Dendritic cell treated with granulocyte-macrophage colony-stimulating factor and Interleukin-4, amounts not matched to agents 40 ng/mL and 50 ng/mL, for 4 days (primary cell): ENCODE measurements at regions of chr15 and their contacts with region 1.

Region 1: GRCh38 chr15:71448688-71449114 is 333.4 kb downstream of the THSD4 start:
- H3K4me3 Mint-ChIP-seq: no peak overlapping the region
- H3K27ac Mint-ChIP-seq: no peak overlapping the region
- H3K4me1 Mint-ChIP-seq: peaks cover under 1% of the 10 kb centered on the region
- H3K27me3 Mint-ChIP-seq: peaks cover 2% of the 10 kb centered on the region

Region 2: GRCh38 chr15:71043361-71043760 is 405.3 kb before region 1 on chr15:
- intact Hi-C with region 1: no loop called
- H3K4me3 Mint-ChIP-seq: no peak overlapping the region
- H3K27ac Mint-ChIP-seq: no peak overlapping the region
- H3K4me1 Mint-ChIP-seq: no peaks in the 10 kb centered on the region
- H3K27me3 Mint-ChIP-seq: no peaks in the 10 kb centered on the region

Region 3: GRCh38 chr15:71730277-71731144 is 281.8 kb after region 1 on chr15:
- intact Hi-C with region 1: loop called (anchors 1 kb)
- H3K4me3 Mint-ChIP-seq: no peak overlapping the region
- H3K27ac Mint-ChIP-seq: no peak overlapping the region
- H3K4me1 Mint-ChIP-seq: no peaks in the 10 kb centered on the region
- H3K27me3 Mint-ChIP-seq: no peaks in the 10 kb centered on the region

Region 4: DNA sequence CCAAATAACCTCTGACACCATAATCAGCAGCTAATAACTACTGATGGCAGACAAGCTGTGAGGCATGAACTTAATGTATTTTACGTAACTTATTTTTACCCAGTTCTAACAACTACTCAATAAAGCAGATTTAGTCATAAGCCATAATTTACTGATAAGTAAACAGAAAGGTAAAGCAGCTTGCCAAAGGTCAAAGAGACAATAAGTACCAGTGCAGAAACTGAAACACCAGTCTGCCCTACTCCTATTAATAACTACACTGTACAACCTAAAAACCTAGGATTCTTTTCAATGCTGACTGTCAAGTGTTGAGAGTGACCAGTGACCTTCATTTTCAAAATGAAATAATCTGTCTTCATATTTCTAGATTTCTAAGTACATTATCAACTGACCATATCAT is 513.8 kb after region 1 on chr15:
- intact Hi-C with region 1: no loop called
- H3K4me3 Mint-ChIP-seq: no peak overlapping the region
- H3K27ac Mint-ChIP-seq: no peak overlapping the region
- H3K4me1 Mint-ChIP-seq: no peaks in the 10 kb centered on the region
- H3K27me3 Mint-ChIP-seq: no peaks in the 10 kb centered on the region